Activated naive CD8-positive, alpha-beta T cell treated with anti-CD3 and anti-CD28 coated beads, Interleukin-2, amount 10 ng/mL, durations not matched to agents 7 days and 5 days (primary cell): ENCODE measurements at regions of chr20 and their contacts with region 1.

Region 1: GRCh38 chr20:47272893-47273590 is 83.5 kb downstream of the ZMYND8 start:
- DNase-seq: no peak
- ATAC-seq: peak; percentile 57
- H3K4me3 Mint-ChIP-seq: no peak overlapping the region
- H3K27ac Mint-ChIP-seq: peak overlapping the region; percentile 52
- H3K4me1 Mint-ChIP-seq: peaks cover 33% of the 10 kb centered on the region
- H3K27me3 Mint-ChIP-seq: no peaks in the 10 kb centered on the region

Region 2: DNA sequence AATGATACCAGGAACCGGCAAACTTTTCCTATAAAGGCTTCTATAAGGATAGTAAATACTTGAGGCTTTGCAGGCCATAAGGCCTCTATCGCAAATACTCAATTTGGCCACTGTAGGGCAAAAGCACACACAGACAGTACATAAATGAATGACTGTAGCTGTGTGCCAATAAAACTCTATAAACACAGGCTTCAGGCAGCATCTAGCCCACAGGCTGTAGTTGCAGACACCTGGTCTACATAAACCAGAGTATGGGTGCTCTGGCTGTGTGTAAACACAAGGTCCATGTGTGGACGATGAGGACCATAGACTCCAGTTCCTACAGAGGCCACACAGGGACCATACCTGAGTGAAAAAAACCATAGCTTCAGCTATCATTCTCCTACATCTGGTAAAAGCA is 31.2 kb after region 1 on chr20:
- POLR2A ChIA-PET with region 1: no interaction called
- DNase-seq: no peak
- ATAC-seq: no peak
- H3K4me3 Mint-ChIP-seq: no peak overlapping the region
- H3K27ac Mint-ChIP-seq: no peak overlapping the region
- H3K4me1 Mint-ChIP-seq: peaks cover 20% of the 10 kb centered on the region
- H3K27me3 Mint-ChIP-seq: no peaks in the 10 kb centered on the region

Region 3: GRCh38 chr20:47379433-47380150 is 106.5 kb after region 1 on chr20:
- POLR2A ChIA-PET with region 1: interaction called, 16 read pairs
- DNase-seq: no peak
- ATAC-seq: no peak
- H3K4me3 Mint-ChIP-seq: no peak overlapping the region
- H3K27ac Mint-ChIP-seq: peak overlapping the region; percentile 79
- H3K4me1 Mint-ChIP-seq: peaks cover 24% of the 10 kb centered on the region
- H3K27me3 Mint-ChIP-seq: no peaks in the 10 kb centered on the region